Mammary epithelial cell (primary cell): ENCODE measurements at regions of chr1 and their contacts with region 1.

Region 1: GRCh38 chr1:201709564-201710295 is 119.2 kb upstream of the IPO9 start:
- DNase-seq: peak; percentile 35
- H3K4me3 ChIP-seq: no peak overlapping the region
- H3K27ac ChIP-seq: no peak overlapping the region
- H3K4me1 ChIP-seq: peaks cover 45% of the 10 kb centered on the region
- H3K27me3 ChIP-seq: no peaks in the 10 kb centered on the region
- CTCF ChIP-seq: peak; percentile 80 to 93

Region 2: DNA sequence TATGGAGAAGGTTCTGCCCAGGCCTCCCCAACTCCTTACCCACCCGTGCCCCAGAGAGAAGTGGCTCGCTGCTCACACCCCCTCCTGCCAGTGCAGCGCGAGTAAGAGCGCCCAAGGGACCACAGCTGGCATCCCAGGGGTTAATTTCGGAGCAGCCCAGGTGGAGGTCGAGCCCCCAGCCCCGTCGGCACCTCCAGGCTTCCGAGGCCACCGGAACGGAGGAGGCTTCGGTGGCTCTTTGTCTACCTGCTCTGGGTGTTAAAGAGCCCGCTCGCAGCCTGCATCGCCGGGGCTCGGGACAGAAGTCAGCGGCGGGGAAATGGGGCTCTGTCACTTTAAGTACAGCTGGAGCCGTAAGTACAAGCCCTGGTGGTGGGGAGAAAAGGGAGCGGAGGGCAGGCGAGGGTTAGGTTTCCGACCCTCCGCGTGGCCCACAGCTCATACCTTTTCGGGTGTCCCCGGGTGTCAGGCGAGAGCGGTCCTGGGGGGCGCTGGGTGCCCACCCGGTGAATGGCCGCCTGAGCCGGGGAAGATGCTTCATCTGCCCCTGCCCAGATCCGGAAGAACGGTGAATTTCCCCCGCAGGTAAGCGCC is 29.9 kb after region 1 on chr1:
- CTCF ChIA-PET with region 1: interaction called, 4 read pairs
- dilution Hi-C with region 1: no loop called
- in situ Hi-C with region 1: no loop called
- intact Hi-C with region 1: loop called (anchors 1 kb)
- DNase-seq: peak; percentile 75
- H3K4me3 ChIP-seq: peak overlapping the region; percentile 68 to 93 (median 88)
- H3K27ac ChIP-seq: peak overlapping the region; percentile 63
- H3K4me1 ChIP-seq: peaks cover 28% of the 10 kb centered on the region
- H3K27me3 ChIP-seq: no peaks in the 10 kb centered on the region
- CTCF ChIP-seq: peak in 1 of 2 donors; percentile 16

Region 3: GRCh38 chr1:201748335-201748734 is 38.6 kb after region 1 on chr1:
- CTCF ChIA-PET with region 1: interaction called, 4 read pairs
- dilution Hi-C with region 1: no loop called
- in situ Hi-C with region 1: no loop called
- intact Hi-C with region 1: loop called (anchors 5 kb)
- DNase-seq: peak; percentile 64
- H3K4me3 ChIP-seq: no peak overlapping the region
- H3K27ac ChIP-seq: no peak overlapping the region
- H3K4me1 ChIP-seq: peaks cover 60% of the 10 kb centered on the region
- H3K27me3 ChIP-seq: no peaks in the 10 kb centered on the region
- CTCF ChIP-seq: no peak

Region 4: DNA sequence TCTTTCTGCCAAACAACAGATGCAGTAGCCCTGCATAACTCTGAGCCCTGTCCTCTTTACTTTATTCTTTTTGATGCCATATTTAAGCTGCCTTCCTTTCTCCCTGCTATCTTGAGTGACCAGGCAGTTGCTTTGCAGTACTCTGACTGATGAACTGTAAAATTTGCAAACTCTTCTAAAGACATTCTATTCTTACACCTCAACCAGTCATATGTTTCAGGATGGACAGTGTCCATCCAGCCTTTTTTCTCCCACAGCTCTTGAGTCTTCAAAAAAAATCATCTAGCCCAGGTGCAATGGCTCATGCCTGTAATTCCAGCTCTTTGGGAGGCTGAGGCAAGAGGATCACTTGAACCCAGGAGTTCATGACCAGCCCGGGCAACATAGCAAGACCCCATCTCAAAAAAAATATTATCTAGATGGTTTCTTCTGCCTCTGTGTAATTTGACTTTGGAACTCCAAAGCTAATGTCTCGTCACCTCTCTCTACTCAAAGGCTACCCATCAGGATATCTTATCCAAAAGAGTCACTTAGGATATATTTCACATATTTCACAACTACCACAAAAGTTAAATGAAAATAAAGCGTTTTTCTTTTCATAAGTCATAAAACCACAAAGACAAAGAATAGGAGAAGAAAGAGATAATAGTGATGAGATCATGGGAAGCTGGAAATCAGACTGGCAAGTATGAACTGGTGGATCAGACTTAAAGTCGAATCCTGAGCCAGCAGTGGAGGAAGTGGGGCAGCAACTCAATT is 64.7 kb after region 1 on chr1:
- CTCF ChIA-PET with region 1: interaction called, 5 read pairs
- dilution Hi-C with region 1: no loop called
- in situ Hi-C with region 1: no loop called
- intact Hi-C with region 1: loop called (anchors 1 kb)
- DNase-seq: peak; percentile 86
- H3K4me3 ChIP-seq: no peak overlapping the region
- H3K27ac ChIP-seq: peak overlapping the region; percentile 94
- H3K4me1 ChIP-seq: peaks cover 63% of the 10 kb centered on the region
- H3K27me3 ChIP-seq: no peaks in the 10 kb centered on the region
- CTCF ChIP-seq: no peak

Region 5: GRCh38 chr1:201783572-201783971 is 73.8 kb after region 1 on chr1:
- CTCF ChIA-PET with region 1: interaction called, 8 read pairs
- dilution Hi-C with region 1: no loop called
- in situ Hi-C with region 1: loop called (anchors 5 kb)
- intact Hi-C with region 1: no loop called
- DNase-seq: no peak
- H3K4me3 ChIP-seq: no peak overlapping the region
- H3K27ac ChIP-seq: no peak overlapping the region
- H3K4me1 ChIP-seq: peaks cover 27% of the 10 kb centered on the region
- H3K27me3 ChIP-seq: no peaks in the 10 kb centered on the region
- CTCF ChIP-seq: peak in 1 of 2 donors; percentile 5

Region 6: DNA sequence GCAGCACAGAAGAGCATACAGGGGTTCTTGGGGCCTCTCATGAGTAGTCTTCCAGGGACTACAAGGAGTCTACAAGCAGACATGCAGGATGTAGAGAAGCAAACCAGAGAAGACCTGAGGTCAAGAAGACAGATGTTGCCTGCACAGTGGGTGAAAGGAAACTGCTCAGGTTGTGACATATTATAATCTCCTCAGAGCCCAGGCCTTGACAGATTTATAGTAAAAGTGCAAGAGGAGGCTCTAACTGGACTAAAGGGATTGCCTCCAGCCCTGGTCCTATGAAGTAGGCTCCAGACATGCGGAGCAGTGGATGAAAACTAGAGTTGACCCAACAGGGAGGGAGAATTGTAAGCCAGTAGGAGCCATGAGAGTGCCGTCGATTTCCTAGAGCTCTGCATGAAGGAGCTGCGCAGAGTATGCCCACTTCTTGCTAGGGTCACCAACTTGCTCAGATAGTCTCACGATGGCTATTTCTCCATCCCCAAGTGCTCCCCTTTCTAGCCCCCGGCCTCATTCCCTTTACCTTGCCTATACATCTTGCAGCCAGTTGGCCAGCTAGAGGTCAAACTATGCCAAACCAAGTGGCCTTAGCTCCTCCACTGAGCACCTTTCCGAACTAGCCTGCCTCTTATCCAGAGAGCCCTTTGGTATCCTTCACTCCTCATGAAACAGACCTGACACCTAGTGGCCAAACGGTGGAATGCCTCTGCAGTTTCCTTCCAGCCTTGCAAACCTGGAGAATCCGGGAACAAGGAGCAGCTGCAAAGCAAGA is 83.0 kb after region 1 on chr1:
- CTCF ChIA-PET with region 1: interaction called, 22 read pairs
- dilution Hi-C with region 1: no loop called
- in situ Hi-C with region 1: loop called (anchors 5 kb)
- intact Hi-C with region 1: loop called (anchors 1 kb)
- DNase-seq: peak; percentile 71
- H3K4me3 ChIP-seq: no peak overlapping the region
- H3K27ac ChIP-seq: no peak overlapping the region
- H3K4me1 ChIP-seq: peaks cover 23% of the 10 kb centered on the region
- H3K27me3 ChIP-seq: no peaks in the 10 kb centered on the region
- CTCF ChIP-seq: peak; percentile 99

Region 7: DNA sequence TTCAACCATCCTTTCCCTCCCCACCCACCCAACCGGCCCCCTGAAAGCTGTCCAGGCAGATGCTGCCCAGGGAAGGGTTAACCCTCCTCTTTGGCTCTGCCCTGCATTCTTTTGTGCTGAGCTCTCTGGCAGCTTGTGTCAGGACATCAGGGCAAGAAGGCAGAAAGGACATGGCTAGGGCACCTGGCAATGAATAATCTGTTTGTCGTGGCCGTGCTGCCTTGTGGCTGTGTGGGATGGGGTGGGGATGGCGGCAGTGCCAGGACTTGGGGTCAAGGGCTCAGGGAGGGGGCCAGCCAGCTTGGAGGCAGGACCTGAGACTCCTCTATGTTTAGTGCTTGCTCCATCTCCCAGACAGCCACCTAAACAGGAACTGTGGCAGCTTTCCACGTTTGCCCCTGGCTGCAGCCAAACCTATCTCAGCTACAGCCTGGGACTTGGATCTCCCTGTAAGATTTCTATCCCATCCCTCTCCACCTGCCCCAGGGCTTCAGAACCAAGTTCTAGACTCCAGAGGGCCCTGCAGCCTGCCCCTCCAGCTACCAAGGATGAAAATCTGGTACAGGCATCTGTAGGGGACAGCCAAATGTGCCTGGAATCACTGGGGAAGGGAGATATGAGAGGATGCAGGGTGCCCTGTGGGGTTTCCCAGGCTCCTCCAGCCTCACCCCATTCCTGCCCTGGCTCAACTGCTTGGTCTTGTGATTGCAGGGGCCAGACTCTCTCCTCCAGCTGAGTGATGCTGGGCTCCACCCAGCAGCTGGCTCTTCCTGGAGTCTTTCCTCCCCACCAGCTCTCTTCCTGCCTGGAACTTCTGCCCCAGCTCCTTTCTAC is 403.3 kb after region 1 on chr1:
- CTCF ChIA-PET with region 1: no interaction called
- dilution Hi-C with region 1: no loop called
- in situ Hi-C with region 1: no loop called
- intact Hi-C with region 1: loop called (anchors 10 kb)
- DNase-seq: peak; percentile 64
- H3K4me3 ChIP-seq: no peak overlapping the region
- H3K27ac ChIP-seq: peak overlapping the region; percentile 32
- H3K4me1 ChIP-seq: peaks cover 20% of the 10 kb centered on the region
- H3K27me3 ChIP-seq: no peaks in the 10 kb centered on the region
- CTCF ChIP-seq: no peak